ENCODE measurements at regions of chr1 and their contacts with region 1.

Region 1: DNA sequence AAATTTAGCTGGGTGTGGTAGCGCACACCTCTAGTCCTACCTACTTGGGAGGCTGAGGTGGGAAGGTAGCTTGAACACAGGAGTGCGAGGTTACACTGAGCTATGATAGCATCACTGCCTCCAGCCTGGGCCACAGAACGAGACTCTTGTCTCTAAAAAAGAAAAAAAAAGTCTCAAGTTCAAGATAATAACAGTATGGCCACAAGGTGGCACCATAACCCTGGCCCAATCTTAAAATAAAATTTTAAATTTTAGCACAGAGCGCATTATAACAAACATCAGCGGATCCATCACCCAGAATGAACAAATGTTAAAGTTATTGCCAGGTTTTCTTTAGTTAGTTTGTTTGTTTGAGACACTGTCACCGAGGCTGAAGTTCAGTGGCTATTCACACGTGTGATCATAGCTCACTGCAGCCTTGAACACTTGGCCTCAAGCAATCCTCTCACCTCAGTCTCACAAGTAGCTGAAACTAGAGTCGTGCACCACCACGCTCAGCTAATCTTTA is 2.9 kb upstream of the HTR6 start:
- DNase-seq: peak; percentile 61
- H3K4me3 Mint-ChIP-seq: no peak overlapping the region
- H3K27ac Mint-ChIP-seq: no peak overlapping the region
- H3K4me1 Mint-ChIP-seq: peaks cover 28% of the 10 kb centered on the region
- H3K27me3 Mint-ChIP-seq: peaks cover 60% of the 10 kb centered on the region

Region 2: DNA sequence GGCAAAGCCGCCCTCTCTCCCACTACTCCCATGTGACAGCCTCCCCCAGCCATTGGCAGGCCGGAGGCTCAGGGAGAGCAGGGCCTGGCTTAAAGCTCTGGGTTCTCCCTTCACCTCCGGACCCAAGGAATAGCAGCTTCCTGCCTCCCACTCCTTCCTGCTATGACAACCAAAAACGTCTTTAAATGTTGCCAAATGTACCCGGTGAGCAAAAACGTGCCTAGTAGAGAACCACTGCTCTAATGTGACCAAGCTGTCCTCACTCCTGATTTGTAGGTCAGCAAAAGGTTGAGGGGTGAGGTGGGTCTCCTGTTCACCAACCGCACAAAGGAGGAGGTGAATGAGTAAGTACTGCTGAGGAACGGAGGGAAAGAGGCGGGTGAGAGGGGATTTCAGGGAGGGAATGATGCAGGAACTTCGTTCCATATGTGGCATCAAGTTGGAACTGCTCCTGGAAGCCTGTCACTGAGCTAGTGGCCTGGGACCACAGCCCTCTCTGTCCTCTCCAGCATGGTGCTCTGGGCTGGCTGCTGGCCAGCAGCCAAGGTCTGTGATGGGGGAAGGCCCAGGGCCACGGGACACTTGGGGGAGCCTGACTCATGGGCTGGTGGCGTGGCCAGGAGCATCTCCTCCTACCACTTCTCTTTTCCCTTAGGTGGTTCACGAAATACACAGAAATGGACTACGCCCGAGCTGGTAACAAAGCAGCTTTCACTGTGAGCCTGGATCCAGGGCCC is 404.4 kb before region 1 on chr1:
- CTCF ChIA-PET with region 1: interaction called, 10 read pairs
- DNase-seq: no peak
- H3K4me3 Mint-ChIP-seq: no peak overlapping the region
- H3K27ac Mint-ChIP-seq: no peak overlapping the region
- H3K4me1 Mint-ChIP-seq: peaks cover 21% of the 10 kb centered on the region
- H3K27me3 Mint-ChIP-seq: no peaks in the 10 kb centered on the region

Region 3: GRCh38 chr1:19684677-19685076 is 22.9 kb after region 1 on chr1:
- CTCF ChIA-PET with region 1: interaction called, 12 read pairs
- DNase-seq: no peak
- H3K4me3 Mint-ChIP-seq: no peak overlapping the region
- H3K27ac Mint-ChIP-seq: no peak overlapping the region
- H3K4me1 Mint-ChIP-seq: peaks cover 24% of the 10 kb centered on the region
- H3K27me3 Mint-ChIP-seq: no peaks in the 10 kb centered on the region

Region 4: GRCh38 chr1:19762175-19762779 is 100.5 kb after region 1 on chr1:
- CTCF ChIA-PET with region 1: interaction called, 16 read pairs
- DNase-seq: peak; percentile 47
- H3K4me3 Mint-ChIP-seq: no peak overlapping the region
- H3K27ac Mint-ChIP-seq: no peak overlapping the region
- H3K4me1 Mint-ChIP-seq: peaks cover 14% of the 10 kb centered on the region
- H3K27me3 Mint-ChIP-seq: no peaks in the 10 kb centered on the region